ENCODE measurements at regions of chr3 and their contacts with region 1.

Region 1: GRCh38 chr3:154285221-154285620 is 39.1 kb downstream of the DHX36 start:
- DNase-seq: no peak
- H3K4me3 ChIP-seq: no peak overlapping the region
- H3K27ac ChIP-seq: no peak overlapping the region
- H3K4me1 ChIP-seq: no peaks in the 10 kb centered on the region
- CTCF ChIP-seq: no peak

Region 2: GRCh38 chr3:154242742-154243141 is 42.5 kb before region 1 on chr3:
- CTCF ChIA-PET with region 1: no interaction called
- POLR2A ChIA-PET with region 1: no interaction called
- intact Hi-C with region 1: no loop called
- DNase-seq: no peak
- H3K4me3 ChIP-seq: no peak overlapping the region
- H3K27ac ChIP-seq: no peak overlapping the region
- H3K4me1 ChIP-seq: no peaks in the 10 kb centered on the region
- CTCF ChIP-seq: no peak

Region 3: DNA sequence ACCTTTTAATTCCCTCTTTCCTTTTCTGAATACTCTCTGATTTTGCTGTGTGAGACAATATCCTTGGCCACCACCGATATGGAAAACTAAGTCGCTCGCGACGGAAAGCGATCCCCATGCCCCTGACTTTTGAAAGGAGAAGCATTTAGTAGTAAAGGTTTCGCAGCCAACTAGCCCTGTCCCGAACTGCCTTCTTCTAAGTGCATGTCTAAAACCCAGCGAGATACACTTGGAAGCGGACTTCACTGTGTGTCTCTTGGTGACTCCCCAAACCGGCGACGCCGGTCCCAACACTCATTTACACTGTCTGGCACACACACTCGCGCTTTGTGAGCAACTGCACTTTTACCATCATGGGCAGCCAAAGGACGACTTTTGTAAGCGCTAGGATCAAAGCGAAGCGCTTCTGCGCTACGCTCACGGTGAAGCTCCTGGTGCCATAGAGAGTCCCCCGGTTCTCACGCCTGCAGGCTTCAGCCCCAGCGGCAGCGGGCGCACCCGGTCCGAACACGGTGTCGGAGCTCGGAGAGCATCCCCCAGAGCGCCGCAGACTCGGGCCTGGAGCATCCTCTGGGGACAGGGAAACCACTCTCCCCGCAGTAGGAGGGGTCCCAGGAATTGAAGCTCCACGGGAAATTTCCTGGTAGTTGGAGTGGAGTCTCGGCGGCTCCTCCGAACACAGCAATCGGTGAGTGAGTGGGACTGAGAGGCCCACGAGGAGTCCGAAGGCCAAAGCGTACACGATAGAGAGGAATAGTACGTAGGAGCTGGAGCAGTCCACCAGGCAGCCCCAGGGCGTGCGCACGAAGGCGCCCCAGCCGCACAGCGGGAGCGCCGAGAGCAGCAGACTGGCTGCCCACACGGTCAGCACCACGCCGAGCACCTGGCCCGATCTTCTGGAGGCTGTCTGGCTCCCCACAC is 143.3 kb after region 1 on chr3:
- CTCF ChIA-PET with region 1: no interaction called
- POLR2A ChIA-PET with region 1: no interaction called
- intact Hi-C with region 1: no loop called
- DNase-seq: no peak
- H3K4me3 ChIP-seq: no peak overlapping the region
- H3K27ac ChIP-seq: no peak overlapping the region
- H3K4me1 ChIP-seq: no peaks in the 10 kb centered on the region
- CTCF ChIP-seq: no peak

Region 4: GRCh38 chr3:155912579-155913190 is 1627.5 kb after region 1 on chr3:
- CTCF ChIA-PET with region 1: no interaction called
- POLR2A ChIA-PET with region 1: no interaction called
- intact Hi-C with region 1: loop called (anchors 10 kb)
- DNase-seq: no peak
- H3K4me3 ChIP-seq: no peak overlapping the region
- H3K27ac ChIP-seq: no peak overlapping the region
- H3K4me1 ChIP-seq: no peaks in the 10 kb centered on the region
- CTCF ChIP-seq: no peak

Measured in OCI-LY7 (cell line).